Right lobe of liver (tissue), 6 donors: ENCODE measurements at regions of chr20 and their contacts with region 1.

Region 1: DNA sequence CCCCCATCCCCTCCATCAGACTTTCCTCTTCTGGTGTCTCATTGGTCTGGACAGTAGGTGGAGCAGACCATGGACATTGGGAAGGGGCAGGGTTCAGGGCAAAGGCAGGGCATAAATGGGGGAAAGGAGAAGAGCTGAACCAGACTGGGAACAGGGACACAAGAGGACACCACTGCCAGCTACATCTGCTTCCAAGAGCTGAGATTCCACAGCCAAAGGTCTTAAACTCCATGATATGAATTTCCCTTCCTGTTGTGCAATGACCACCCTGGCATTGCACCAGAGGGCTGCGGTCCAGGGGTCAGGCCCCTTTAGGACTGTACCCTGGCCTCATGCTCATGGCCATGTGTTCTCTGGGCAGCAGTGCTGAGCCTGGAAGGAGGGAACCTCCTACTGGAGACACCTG is 137.9 kb downstream of the MAFB start:
- DNase-seq: peak; percentile 82 to 95 (median 89)
- ATAC-seq: peak; percentile 92 to 98 (median 96)
- H3K4me3 ChIP-seq: peak overlapping the region in 2 of 3 donors; percentile 14 to 28
- H3K27ac ChIP-seq: peak overlapping the region; percentile 56 to 78 (median 62)
- H3K4me1 ChIP-seq: peaks cover 0 to 26% (median 5%) of the 10 kb centered on the region in 4 donors
- H3K27me3 ChIP-seq: no peaks in the 10 kb centered on the region
- CTCF ChIP-seq: peak in 1 of 4 donors; percentile 18
- POLR2A ChIP-seq: no peak

Region 2: DNA sequence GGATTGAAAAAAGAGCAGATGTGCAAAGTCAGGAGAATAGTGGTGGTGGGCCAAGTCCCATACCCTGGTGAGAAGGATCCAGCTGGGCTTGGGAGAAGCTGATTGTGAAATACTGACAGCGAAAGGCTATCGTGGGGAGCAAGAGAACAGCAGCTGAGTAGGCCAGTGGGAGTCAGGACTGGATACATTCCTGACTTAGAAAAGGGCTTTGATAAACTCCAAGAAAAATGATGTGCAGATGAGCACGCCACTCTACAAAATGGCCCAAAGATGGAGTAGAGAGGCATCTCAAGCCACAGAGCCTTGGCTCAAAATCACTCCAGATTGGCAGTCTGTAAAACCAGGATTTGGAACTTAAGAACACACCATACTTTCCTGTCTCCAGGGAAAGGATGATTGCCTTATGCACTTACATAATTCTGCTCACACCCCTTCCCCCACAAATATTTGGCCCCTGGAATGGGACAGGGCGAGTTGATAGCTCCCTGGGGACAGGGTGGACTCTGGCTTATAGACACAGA is 440.8 kb before region 1 on chr20:
- intact Hi-C with region 1: no loop called
- DNase-seq: no peak
- ATAC-seq: no peak
- H3K4me3 ChIP-seq: no peak overlapping the region
- H3K27ac ChIP-seq: no peak overlapping the region
- H3K4me1 ChIP-seq: no peaks in the 10 kb centered on the region
- H3K27me3 ChIP-seq: no peaks in the 10 kb centered on the region
- CTCF ChIP-seq: no peak
- POLR2A ChIP-seq: no peak

Region 3: DNA sequence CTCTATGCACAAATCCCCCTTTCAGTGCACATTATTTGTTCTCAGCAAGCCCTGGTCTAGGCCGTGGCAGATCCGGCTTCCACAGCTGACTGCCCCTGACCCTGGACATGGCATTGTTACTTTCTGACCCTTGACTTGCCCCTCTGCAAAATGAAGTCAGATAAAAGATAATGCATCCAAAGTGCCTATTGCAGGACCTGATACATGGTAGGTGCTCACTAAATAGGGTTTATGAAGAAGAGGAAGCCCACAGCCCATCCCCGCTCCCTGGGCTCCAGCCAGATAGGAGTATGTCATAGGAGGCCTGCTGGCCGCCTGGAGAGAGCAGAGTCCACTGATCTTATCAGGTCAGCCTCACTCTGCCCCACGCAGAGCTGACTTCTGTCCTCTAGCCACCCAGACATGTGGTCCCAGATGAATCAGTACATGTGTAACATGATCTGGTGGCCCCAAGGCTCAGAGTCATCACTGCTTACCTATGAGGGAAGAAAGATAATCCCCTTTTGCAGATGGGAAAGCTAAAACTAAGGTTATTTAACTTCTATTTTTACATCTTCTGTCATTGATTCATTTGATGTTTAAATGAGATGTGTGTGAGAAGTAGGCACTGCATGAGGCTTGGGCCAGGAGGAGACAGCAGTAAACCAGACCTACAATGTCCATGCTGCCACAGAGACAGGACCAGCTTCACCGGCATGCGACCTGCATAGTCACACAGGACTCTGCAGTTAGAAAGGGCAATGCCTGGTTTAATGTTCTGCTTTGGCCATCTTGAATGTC is 117.5 kb after region 1 on chr20:
- intact Hi-C with region 1: loop called in 1 of 2 experiments (anchors 10 kb)
- DNase-seq: peak; percentile 85 to 93 (median 89)
- ATAC-seq: peak; percentile 89 to 95 (median 92)
- H3K4me3 ChIP-seq: no peak overlapping the region
- H3K27ac ChIP-seq: peak overlapping the region; percentile 20 to 64 (median 53)
- H3K4me1 ChIP-seq: peaks cover 0 to 27% (median 13%) of the 10 kb centered on the region in 4 donors
- H3K27me3 ChIP-seq: no peaks in the 10 kb centered on the region
- CTCF ChIP-seq: no peak
- POLR2A ChIP-seq: no peak

Region 4: DNA sequence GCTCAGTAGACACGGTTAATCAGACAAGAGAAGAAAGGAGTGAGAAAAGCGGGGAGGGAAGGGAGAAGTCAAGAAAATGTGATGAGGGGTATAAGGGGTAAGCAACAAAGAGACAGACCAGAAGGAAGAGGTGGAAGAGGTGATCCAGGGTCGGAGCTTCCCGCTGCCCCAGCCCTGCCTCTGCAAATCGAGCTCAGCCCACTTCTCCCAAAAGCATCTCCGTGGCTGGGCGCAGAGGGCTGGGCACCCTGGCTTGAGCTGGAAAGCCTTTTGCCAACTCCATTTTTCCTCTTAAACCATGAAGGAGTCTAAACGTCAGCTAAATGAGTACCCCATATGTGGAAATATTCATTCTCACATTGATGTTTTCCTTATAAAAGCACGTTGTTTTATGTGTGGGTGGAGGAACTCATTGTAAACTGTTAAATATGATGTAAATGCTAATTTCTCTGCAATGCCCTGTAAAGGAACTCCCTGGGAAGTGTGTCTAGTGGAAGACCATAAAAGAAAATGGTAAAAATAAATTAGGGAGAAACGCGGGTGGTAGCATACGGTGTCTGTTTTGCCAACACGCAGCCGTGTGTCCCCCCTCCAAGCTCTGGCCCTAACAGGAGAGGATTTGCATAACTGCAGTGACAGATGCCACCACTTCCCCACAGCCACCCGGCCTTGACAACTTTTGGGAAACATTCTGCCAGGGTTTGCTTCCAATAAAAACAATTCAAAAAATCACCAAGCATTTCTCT is 193.1 kb after region 1 on chr20:
- intact Hi-C with region 1: no loop called
- DNase-seq: no peak
- ATAC-seq: no peak
- H3K4me3 ChIP-seq: no peak overlapping the region
- H3K27ac ChIP-seq: no peak overlapping the region
- H3K4me1 ChIP-seq: no peaks in the 10 kb centered on the region
- H3K27me3 ChIP-seq: no peaks in the 10 kb centered on the region
- CTCF ChIP-seq: no peak
- POLR2A ChIP-seq: no peak